Activated CD4-positive, alpha-beta memory T cell treated with anti-CD3 and anti-CD28 coated beads for 36 hours (primary cell): ENCODE measurements at regions of chr2 and their contacts with region 1.

Region 1: GRCh38 chr2:241859436-241860183 is 916 bp upstream of the PDCD1 start:
- DNase-seq: peak; percentile 85
- H3K4me3 Mint-ChIP-seq: peak overlapping the region; percentile 90
- H3K27ac Mint-ChIP-seq: peak overlapping the region; percentile 95
- H3K4me1 Mint-ChIP-seq: peaks cover 57% of the 10 kb centered on the region
- H3K27me3 Mint-ChIP-seq: peaks cover 4% of the 10 kb centered on the region

Region 2: DNA sequence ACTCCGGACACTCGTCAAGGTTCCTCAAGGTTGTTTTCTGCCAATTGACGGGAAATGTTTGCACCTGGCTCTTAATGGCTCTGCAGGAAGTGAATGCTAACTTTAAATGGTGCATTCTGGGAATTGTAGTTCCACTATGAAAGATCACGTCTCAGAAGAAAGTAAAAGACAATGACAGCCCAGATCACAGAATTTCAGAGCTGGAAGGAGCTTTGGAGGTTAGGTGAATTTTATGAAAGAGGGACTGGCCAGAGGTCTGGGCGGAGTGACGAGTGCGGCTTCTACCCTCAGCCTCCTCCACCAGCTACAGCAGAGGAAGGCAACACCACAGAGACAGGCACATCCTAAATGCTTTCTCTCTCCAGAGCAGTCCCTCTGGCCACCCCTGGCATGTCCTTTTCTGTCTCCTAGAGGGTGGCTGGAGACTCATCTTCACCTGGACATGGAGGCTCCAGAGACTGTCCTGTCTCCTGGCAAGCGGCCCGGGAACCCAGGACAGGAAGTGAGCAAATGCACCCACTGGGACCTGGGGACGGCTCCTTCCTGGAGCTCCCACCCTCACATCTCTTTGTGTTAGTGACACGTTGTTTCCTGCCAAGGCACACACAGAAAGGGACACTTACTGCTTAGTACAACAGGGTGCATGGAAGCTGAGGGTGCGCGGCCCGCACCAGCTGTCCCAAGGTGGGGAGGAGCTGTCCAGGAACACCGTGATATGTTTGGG is 242.0 kb before region 1 on chr2:
- CTCF ChIA-PET with region 1: no interaction called
- POLR2A ChIA-PET with region 1: no interaction called
- intact Hi-C with region 1: loop called (anchors 1 kb)
- DNase-seq: peak; percentile 63
- H3K4me3 Mint-ChIP-seq: peak overlapping the region; percentile 74
- H3K27ac Mint-ChIP-seq: peak overlapping the region; percentile 87
- H3K4me1 Mint-ChIP-seq: peaks cover 47% of the 10 kb centered on the region
- H3K27me3 Mint-ChIP-seq: no peaks in the 10 kb centered on the region

Region 3: GRCh38 chr2:241734467-241735208 is 125.0 kb before region 1 on chr2 and contains the start of gene D2HGDH:
- CTCF ChIA-PET with region 1: interaction called, 4 read pairs
- POLR2A ChIA-PET with region 1: interaction called, 4 read pairs
- intact Hi-C with region 1: loop called (anchors 5 kb)
- DNase-seq: peak; percentile 95
- H3K4me3 Mint-ChIP-seq: peak within 1 kb of the TSS; percentile 81
- H3K27ac Mint-ChIP-seq: peak within 1 kb of the TSS; percentile 70
- H3K4me1 Mint-ChIP-seq: peaks cover 49% of the 10 kb centered on the region
- H3K27me3 Mint-ChIP-seq: no peaks in the 10 kb centered on the region
- total RNA-seq, gene D2HGDH: 27.5 to 28.2 TPM

Region 4: GRCh38 chr2:241762933-241763369 is 96.7 kb before region 1 on chr2:
- CTCF ChIA-PET with region 1: no interaction called
- POLR2A ChIA-PET with region 1: interaction called, 9 read pairs
- intact Hi-C with region 1: loop called (anchors 5 kb)
- DNase-seq: peak; percentile 85
- H3K4me3 Mint-ChIP-seq: peak overlapping the region; percentile 44
- H3K27ac Mint-ChIP-seq: peak overlapping the region; percentile 89
- H3K4me1 Mint-ChIP-seq: peaks cover 38% of the 10 kb centered on the region
- H3K27me3 Mint-ChIP-seq: no peaks in the 10 kb centered on the region

Region 5: DNA sequence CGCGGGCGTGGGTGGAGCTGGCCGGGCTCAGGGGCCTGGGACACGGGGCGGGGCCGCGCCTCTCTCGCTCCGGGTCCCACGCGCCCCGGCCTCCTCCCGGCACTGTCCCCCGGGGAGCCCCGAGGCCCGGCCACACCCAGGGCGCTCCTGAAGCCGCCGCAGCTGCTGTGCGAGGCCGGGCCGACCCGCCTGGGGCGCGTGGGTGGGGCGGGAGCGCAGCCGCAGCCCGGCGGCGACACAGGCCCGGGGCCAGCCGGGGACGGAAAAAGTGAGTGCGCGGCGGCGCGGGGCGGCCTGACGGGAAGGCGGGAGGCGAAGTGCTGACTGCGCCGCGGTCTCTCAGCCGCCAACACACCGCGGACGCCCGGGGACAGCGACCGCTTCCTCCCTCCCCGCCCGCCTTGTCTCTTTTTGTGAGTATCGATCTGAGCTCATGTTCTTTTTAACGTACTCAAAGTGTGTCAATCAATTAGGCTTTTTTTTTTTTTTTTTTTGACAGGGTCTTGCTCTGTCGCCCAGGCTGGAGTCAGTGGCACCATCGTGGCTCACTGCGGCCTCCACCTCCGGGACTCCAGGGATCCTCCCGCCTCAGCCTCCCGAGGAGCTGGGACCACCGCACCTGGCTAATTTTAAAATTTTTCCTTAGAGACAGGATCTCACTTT is 15.4 kb before region 1 on chr2:
- CTCF ChIA-PET with region 1: interaction called, 4 read pairs
- POLR2A ChIA-PET with region 1: interaction called, 21 read pairs
- intact Hi-C with region 1: loop called (anchors 1 kb)
- DNase-seq: peak; percentile 94
- H3K4me3 Mint-ChIP-seq: peak overlapping the region; percentile 72
- H3K27ac Mint-ChIP-seq: peak overlapping the region; percentile 82
- H3K4me1 Mint-ChIP-seq: peaks cover 39% of the 10 kb centered on the region
- H3K27me3 Mint-ChIP-seq: peaks cover 5% of the 10 kb centered on the region

Region 6: DNA sequence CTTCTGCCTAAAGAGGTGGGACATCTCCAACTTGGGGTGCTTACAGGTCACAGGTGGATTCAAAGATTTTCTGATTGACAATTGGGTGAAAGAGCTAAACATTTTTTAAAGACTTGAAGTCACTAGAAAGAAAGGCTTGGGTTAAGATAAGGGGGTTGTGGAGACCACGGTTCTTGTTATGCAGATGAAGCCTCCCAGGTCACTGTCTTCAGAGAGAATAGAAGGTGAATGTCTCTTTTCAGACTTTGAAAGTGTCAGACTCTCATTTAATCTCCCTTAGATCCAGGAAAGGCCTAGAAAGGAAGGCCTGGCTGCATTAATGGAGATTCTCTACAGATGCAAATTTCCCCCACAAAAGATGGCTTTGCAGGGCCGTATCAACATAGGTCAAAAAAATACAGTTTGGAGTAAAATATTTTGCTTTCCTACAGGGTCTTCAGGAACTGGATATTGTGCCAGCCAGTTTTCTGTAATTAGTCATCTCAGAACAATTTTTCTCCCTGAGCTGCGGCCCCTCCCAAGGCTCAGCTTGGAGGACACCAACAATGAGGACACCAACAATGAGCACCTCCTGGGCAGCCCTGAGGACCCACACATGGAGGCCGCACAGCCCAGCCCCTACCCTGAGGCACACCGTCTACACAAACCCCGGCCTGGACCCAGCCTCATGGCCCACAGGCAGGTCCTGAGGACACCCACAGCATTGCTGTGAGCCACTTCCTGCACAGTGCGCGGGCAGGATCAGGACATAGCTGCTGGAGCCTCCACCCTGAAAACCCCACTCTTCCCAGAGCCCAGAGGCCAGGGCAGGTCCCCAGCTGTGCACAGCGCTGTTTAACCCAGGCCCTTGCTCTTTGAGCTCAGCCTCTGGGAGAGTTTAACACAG is 204.0 kb after region 1 on chr2:
- CTCF ChIA-PET with region 1: no interaction called
- POLR2A ChIA-PET with region 1: no interaction called
- intact Hi-C with region 1: no loop called
- DNase-seq: no peak
- H3K4me3 Mint-ChIP-seq: no peak overlapping the region
- H3K27ac Mint-ChIP-seq: no peak overlapping the region
- H3K4me1 Mint-ChIP-seq: no peaks in the 10 kb centered on the region
- H3K27me3 Mint-ChIP-seq: peaks cover 13% of the 10 kb centered on the region